CD8-positive, alpha-beta T cell (primary cell): ENCODE measurements at regions of chr4 and their contacts with region 1.

Region 1: DNA sequence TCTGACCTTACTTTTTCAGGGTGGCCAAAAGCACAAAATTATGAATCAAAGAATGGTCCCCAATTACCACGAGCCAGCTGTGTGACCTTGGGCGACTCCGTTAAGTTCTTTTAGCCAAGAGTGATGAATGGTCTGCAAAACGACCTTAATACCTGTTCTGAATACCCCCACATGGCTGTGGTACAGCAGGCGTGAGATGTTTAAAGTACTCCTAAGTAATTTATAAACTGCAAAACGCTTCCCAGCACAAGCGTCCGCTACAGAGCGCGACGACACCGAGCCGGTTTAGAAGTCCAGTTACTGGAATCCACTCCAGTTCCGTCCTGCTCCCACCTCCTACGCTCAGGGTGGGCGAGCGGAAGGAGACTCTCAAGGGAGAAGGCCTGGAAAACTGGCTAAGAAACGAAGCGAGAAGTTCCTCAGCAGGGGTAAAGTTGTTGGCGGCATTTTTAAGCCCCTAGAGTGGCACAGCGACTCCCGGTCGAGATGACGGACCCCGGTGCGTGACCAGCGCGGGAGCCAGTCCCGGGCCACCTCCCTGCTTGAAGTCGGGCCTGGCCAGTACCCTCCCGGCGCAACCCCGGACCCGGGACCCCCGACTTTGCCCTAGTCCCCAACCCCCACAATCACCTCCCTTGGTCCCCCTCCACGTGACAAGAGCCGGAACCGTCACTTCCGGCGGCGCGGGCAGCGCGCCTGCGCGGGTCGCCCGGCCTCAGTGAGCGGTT is 683 bp upstream of the BMP2K start:
- DNase-seq: peak; percentile 75 to 93 (median 86)
- ATAC-seq: peak; percentile 57
- H3K4me3 ChIP-seq: peak overlapping the region; percentile 87
- H3K4me3 Mint-ChIP-seq: peak overlapping the region; percentile 92
- H3K27ac ChIP-seq: peak overlapping the region; percentile 82 to 87
- H3K27ac Mint-ChIP-seq: peak overlapping the region; percentile 94
- H3K4me1 ChIP-seq: peaks cover 17% of the 10 kb centered on the region
- H3K4me1 Mint-ChIP-seq: peaks cover 16% of the 10 kb centered on the region
- H3K27me3 ChIP-seq: no peaks in the 10 kb centered on the region
- H3K27me3 Mint-ChIP-seq: no peaks in the 10 kb centered on the region
- CTCF ChIP-seq: no peak

Region 2: DNA sequence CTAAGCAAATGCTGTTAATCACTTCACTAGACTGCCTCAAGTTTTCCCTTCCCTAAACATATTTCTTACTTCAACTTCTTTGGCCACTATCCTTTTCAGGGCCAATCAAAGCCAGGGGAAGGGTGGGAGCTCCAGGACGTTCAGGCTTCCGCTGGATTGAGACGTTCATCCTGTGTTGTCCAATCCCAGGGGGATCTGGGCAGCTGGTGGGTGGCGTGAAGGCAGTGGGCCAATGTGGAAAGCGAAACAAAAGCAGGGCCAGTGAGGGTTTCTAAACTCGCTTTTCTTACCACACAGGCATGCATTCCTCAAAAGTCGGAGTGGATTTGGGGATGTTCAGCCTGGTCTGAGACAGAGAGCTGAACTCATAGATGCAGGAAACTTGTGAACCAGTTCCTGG is 1162.2 kb before region 1 on chr4:
- CTCF ChIA-PET with region 1: no interaction called
- POLR2A ChIA-PET with region 1: no interaction called
- intact Hi-C with region 1: no loop called
- DNase-seq: no peak
- ATAC-seq: no peak
- H3K4me3 ChIP-seq: no peak overlapping the region
- H3K4me3 Mint-ChIP-seq: no peak overlapping the region
- H3K27ac ChIP-seq: no peak overlapping the region
- H3K27ac Mint-ChIP-seq: no peak overlapping the region
- H3K4me1 ChIP-seq: no peaks in the 10 kb centered on the region
- H3K4me1 Mint-ChIP-seq: no peaks in the 10 kb centered on the region
- H3K27me3 ChIP-seq: no peaks in the 10 kb centered on the region
- H3K27me3 Mint-ChIP-seq: peaks cover 8% of the 10 kb centered on the region
- CTCF ChIP-seq: no peak

Region 3: GRCh38 chr4:78656968-78657445 is 118.5 kb before region 1 on chr4:
- CTCF ChIA-PET with region 1: no interaction called
- POLR2A ChIA-PET with region 1: interaction called, 3 read pairs
- intact Hi-C with region 1: loop called in 1 of 2 experiments (anchors 5 kb)
- DNase-seq: peak in 3 of 9 experiments; percentile 6 to 24 (median 8)
- ATAC-seq: peak; percentile 26
- H3K4me3 ChIP-seq: no peak overlapping the region
- H3K4me3 Mint-ChIP-seq: peak overlapping the region; percentile 79
- H3K27ac ChIP-seq: no peak overlapping the region
- H3K27ac Mint-ChIP-seq: peak overlapping the region; percentile 80
- H3K4me1 ChIP-seq: peaks cover 24% of the 10 kb centered on the region
- H3K4me1 Mint-ChIP-seq: peaks cover 33% of the 10 kb centered on the region
- H3K27me3 ChIP-seq: no peaks in the 10 kb centered on the region
- H3K27me3 Mint-ChIP-seq: no peaks in the 10 kb centered on the region
- CTCF ChIP-seq: no peak

Region 4: DNA sequence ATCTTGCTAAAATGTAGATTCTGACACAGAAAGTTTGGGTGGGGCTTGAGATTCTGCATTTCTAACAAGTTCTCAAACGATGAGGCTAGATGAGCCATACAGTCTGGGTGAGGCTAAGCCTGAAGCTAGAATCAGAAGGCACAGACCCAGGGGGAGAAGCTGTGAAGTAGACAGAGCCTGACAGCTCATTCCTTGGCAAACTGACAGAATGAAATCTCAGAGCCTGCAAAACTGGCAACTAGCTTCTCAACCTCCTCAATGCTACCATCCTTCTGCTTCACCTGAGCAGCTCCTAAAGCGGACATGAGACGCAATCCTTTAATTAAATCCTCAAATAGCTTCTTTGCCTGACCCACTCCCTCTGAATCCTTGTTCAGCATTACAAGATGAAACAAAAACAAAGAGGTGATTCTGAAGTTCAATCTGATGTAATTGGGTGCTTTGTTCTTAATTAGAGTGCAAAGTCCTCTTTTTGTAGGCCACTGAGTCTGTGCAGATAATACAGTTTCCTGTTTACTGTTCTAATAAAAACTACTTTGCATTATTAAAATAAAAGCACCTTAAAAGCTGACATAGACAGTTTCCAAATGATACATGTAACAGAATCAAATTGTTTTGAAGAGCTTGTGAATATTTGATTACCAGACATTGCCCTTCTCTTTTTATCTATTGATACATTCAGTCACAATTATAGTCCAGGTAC is 70.3 kb before region 1 on chr4:
- CTCF ChIA-PET with region 1: no interaction called
- POLR2A ChIA-PET with region 1: no interaction called
- intact Hi-C with region 1: no loop called
- DNase-seq: no peak
- ATAC-seq: no peak
- H3K4me3 ChIP-seq: no peak overlapping the region
- H3K4me3 Mint-ChIP-seq: no peak overlapping the region
- H3K27ac ChIP-seq: no peak overlapping the region
- H3K27ac Mint-ChIP-seq: no peak overlapping the region
- H3K4me1 ChIP-seq: no peaks in the 10 kb centered on the region
- H3K4me1 Mint-ChIP-seq: no peaks in the 10 kb centered on the region
- H3K27me3 ChIP-seq: no peaks in the 10 kb centered on the region
- H3K27me3 Mint-ChIP-seq: no peaks in the 10 kb centered on the region
- CTCF ChIP-seq: no peak

Region 5: GRCh38 chr4:78845472-78845871 is 70.0 kb after region 1 on chr4:
- CTCF ChIA-PET with region 1: no interaction called
- POLR2A ChIA-PET with region 1: no interaction called
- intact Hi-C with region 1: loop called in 1 of 2 experiments (anchors 10 kb)
- DNase-seq: no peak
- ATAC-seq: no peak
- H3K4me3 ChIP-seq: no peak overlapping the region
- H3K4me3 Mint-ChIP-seq: no peak overlapping the region
- H3K27ac ChIP-seq: no peak overlapping the region
- H3K27ac Mint-ChIP-seq: no peak overlapping the region
- H3K4me1 ChIP-seq: no peaks in the 10 kb centered on the region
- H3K4me1 Mint-ChIP-seq: no peaks in the 10 kb centered on the region
- H3K27me3 ChIP-seq: no peaks in the 10 kb centered on the region
- H3K27me3 Mint-ChIP-seq: no peaks in the 10 kb centered on the region
- CTCF ChIP-seq: no peak

Region 6: GRCh38 chr4:78876568-78877320 is 101.3 kb after region 1 on chr4:
- CTCF ChIA-PET with region 1: no interaction called
- POLR2A ChIA-PET with region 1: no interaction called
- intact Hi-C with region 1: no loop called
- DNase-seq: no peak
- ATAC-seq: no peak
- H3K4me3 ChIP-seq: no peak overlapping the region
- H3K4me3 Mint-ChIP-seq: no peak overlapping the region
- H3K27ac ChIP-seq: no peak overlapping the region
- H3K27ac Mint-ChIP-seq: no peak overlapping the region
- H3K4me1 ChIP-seq: no peaks in the 10 kb centered on the region
- H3K4me1 Mint-ChIP-seq: no peaks in the 10 kb centered on the region
- H3K27me3 ChIP-seq: no peaks in the 10 kb centered on the region
- H3K27me3 Mint-ChIP-seq: no peaks in the 10 kb centered on the region
- CTCF ChIP-seq: no peak

Region 7: DNA sequence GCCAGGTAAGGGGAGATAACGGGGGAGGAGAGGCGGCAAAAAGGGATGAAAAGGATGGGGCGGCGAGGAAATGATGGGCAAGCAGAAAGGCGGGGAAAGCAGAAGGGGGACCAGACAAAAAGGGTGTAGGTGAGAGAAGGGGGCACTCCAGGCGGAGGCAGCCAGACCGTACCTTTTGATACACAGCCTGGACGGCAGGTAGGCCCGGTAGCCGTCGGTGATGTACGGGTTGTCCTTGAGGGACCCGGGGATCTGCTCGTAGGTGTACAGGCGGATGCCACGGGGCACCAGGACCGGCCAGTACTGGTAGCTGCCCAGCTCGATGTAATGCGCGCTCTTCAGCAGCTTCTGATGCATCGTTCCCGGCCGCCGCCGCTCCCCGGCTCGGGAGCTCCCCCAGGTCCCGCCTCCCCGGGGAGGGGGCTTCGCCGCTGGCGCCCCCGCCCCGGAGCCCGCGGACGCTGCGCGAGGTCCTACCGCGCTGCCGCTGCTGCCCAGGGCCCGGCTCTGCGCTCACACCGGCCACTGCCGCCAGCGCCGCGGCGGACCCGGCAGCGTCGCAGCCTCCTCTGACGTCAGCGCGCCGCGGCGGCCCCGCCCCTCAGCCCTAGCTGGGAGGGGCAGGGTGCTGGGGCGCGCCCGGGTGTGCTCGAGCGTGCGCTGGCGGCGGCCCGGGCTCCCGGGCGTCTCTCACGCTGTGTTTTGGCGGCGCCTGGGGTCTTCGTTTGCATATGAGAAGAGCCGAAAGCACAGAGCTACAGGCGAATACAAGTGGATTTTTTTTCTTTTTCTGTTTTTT is 163.6 kb after region 1 on chr4 and contains the start of gene PAQR3:
- CTCF ChIA-PET with region 1: no interaction called
- POLR2A ChIA-PET with region 1: no interaction called
- intact Hi-C with region 1: loop called (anchors 1 to 2 kb)
- DNase-seq: peak; percentile 67 to 92 (median 83)
- ATAC-seq: peak; percentile 96
- H3K4me3 ChIP-seq: peak within 1 kb of the TSS; percentile 88 to 89
- H3K4me3 Mint-ChIP-seq: peak within 1 kb of the TSS; percentile 90
- H3K27ac ChIP-seq: peak within 1 kb of the TSS; percentile 67 to 77
- H3K27ac Mint-ChIP-seq: peak within 1 kb of the TSS; percentile 86
- H3K4me1 ChIP-seq: peaks cover 26% of the 10 kb centered on the region
- H3K4me1 Mint-ChIP-seq: peaks cover 40% of the 10 kb centered on the region
- H3K27me3 ChIP-seq: no peaks in the 10 kb centered on the region
- H3K27me3 Mint-ChIP-seq: peaks cover 11% of the 10 kb centered on the region
- CTCF ChIP-seq: no peak
- total RNA-seq, gene PAQR3: 17.8 to 19.3 TPM

Region 8: GRCh38 chr4:79780811-79781210 is 1005.3 kb after region 1 on chr4:
- CTCF ChIA-PET with region 1: no interaction called
- POLR2A ChIA-PET with region 1: no interaction called
- intact Hi-C with region 1: no loop called
- DNase-seq: no peak
- ATAC-seq: no peak
- H3K4me3 ChIP-seq: no peak overlapping the region
- H3K4me3 Mint-ChIP-seq: no peak overlapping the region
- H3K27ac ChIP-seq: no peak overlapping the region
- H3K27ac Mint-ChIP-seq: no peak overlapping the region
- H3K4me1 ChIP-seq: no peaks in the 10 kb centered on the region
- H3K4me1 Mint-ChIP-seq: no peaks in the 10 kb centered on the region
- H3K27me3 ChIP-seq: no peaks in the 10 kb centered on the region
- H3K27me3 Mint-ChIP-seq: no peaks in the 10 kb centered on the region
- CTCF ChIP-seq: no peak